HAP-1 (cell line): ENCODE measurements at regions of chr5 and their contacts with region 1.

Region 1: DNA sequence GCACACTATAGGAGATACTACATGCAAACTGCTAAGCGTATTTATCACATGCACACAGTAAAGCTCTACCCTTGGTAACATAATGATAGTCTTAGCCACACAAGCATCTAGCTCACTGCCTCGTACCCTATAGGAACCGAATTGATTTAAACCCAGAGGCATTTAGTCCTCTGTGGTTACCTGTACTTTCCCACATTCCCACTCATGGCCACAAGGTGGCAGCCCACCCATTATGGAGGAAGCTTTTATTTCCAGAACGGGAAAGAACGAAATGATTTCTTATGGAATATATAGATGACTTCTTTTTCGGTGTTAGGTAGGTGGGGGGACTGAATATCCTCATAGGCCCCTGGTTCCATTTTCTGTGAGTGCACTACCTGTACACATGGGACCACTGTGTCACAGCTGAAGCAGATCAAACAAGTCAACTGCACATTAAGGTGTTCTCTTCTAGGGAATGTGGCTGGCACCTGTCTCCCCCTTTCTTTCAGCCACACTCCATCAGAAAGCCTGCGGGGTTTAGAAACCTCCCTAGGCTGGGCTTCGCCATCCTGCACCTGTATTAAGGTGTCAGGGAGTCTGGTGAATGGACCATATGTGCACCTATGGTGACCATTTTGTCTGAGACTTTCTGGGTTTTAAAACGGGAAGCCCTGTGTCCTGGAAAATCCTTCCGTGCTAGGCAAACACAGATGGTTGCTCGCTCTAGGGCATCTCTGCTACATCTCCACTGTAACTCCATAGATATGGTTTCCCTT is 313.2 kb downstream of the SLIT3 start:
- DNase-seq: peak; percentile 75 to 90
- H3K4me3 ChIP-seq: no peak overlapping the region
- H3K4me1 ChIP-seq: peaks cover 9% of the 10 kb centered on the region
- H3K27me3 ChIP-seq: no peaks in the 10 kb centered on the region

Region 2: DNA sequence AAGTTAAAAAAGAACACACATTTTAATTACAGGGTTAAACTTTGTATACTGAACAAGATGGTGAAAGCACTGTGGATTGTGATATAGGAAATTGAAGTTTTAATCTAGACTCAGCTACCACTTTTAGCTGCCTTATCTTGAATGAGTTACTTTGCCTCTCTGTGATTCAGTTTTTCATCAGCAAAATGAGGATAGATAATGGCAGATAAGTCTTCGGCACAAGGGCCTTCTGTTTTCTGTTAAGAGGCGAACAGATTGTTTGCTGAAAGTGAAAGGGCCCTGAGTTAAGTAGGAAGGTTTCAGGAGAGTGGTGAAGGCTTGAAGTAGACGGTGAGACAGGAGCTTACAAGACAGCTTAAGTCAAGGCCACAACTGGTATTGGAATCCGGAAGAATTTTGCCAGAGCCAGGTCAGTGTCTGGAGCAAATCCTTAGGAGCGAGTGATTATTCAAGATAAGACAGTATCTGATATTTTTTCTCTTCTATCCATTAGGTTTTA is 493.6 kb before region 1 on chr5:
- in situ Hi-C with region 1: no loop called
- DNase-seq: no peak
- H3K4me3 ChIP-seq: no peak overlapping the region
- H3K4me1 ChIP-seq: no peaks in the 10 kb centered on the region
- H3K27me3 ChIP-seq: no peaks in the 10 kb centered on the region

Region 3: DNA sequence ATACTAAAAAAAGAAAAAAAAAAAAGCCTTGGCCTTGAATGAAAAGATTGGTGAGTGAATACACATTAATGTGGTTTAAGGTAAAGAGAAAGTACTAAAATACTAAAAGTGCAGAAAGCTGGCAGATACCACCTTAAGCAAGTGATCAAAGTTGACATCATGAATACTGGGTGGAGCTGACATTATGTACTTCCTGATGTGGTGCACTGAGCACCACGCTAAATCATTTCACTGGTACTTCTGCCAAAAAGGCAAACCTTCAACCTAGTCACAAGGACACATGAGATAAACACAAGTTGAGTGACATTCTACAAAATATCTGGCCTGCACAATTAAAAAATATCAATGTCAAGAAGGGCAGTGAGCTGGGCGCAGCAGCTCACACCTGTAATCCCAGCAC is 374.7 kb before region 1 on chr5:
- in situ Hi-C with region 1: no loop called
- DNase-seq: no peak
- H3K4me3 ChIP-seq: no peak overlapping the region
- H3K4me1 ChIP-seq: 0 out of 2 replicates have a peak, but pooled peaks cover 3% of the 10 kb centered on the region
- H3K27me3 ChIP-seq: peaks cover 2% of the 10 kb centered on the region; the same call in 1 of the 2 replicates

Region 4: GRCh38 chr5:169302491-169303118 is 314.9 kb after region 1 on chr5:
- in situ Hi-C with region 1: loop called (anchors 10 kb)
- DNase-seq: peak; percentile 72 to 90
- H3K4me3 ChIP-seq: no peak overlapping the region
- H3K4me1 ChIP-seq: peaks cover 4% of the 10 kb centered on the region; the same call in 1 of the 2 replicates
- H3K27me3 ChIP-seq: peaks cover 6% of the 10 kb centered on the region; the same call in 1 of the 2 replicates

Region 5: DNA sequence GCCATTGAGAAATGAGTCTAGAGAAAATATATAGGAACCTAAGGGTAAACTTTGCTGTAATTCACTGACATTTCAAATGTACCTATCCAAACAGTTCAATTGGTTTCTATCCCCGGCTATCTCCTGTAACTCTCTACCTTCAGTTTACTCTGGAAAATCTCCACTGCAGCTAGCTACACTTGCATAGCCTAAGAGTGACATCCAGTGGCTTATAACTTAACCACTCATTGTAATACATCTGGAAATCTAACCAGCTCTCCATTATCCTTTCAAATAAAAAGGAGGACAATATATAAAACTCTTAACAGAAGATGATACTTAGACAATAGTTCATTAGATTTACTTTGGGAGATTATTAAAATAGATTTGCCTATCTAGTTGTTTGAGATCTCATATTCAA is 560.6 kb after region 1 on chr5:
- in situ Hi-C with region 1: loop called (anchors 25 kb)
- DNase-seq: peak in 1 of 2 experiments; percentile 2
- H3K4me3 ChIP-seq: no peak overlapping the region
- H3K4me1 ChIP-seq: no peaks in the 10 kb centered on the region
- H3K27me3 ChIP-seq: peaks cover 8% of the 10 kb centered on the region

Region 6: GRCh38 chr5:169583424-169584204 is 595.9 kb after region 1 on chr5 and contains the start of gene SPDL1:
- in situ Hi-C with region 1: loop called (anchors 10 kb)
- DNase-seq: peak; percentile 90 to 95
- H3K4me3 ChIP-seq: peak within 1 kb of the TSS; percentile 71
- H3K4me1 ChIP-seq: peaks cover 7% of the 10 kb centered on the region
- H3K27me3 ChIP-seq: peaks cover 3% of the 10 kb centered on the region; the same call in 1 of the 2 replicates